Naive thymus-derived CD8-positive, alpha-beta T cell (primary cell): ENCODE measurements at regions of chr17 and their contacts with region 1.

Region 1: GRCh38 chr17:45034599-45034998 is 16.8 kb downstream of the DCAKD start:
- DNase-seq: no peak
- ATAC-seq: no peak
- H3K4me3 Mint-ChIP-seq: no peak overlapping the region
- H3K27ac Mint-ChIP-seq: peak overlapping the region in 2 of 10 donors; percentile 63 to 79
- H3K4me1 Mint-ChIP-seq: peaks cover 5 to 23% (median 9%) of the 10 kb centered on the region in 4 donors
- H3K27me3 Mint-ChIP-seq: no peaks in the 10 kb centered on the region

Region 2: GRCh38 chr17:44959821-44960531 is 74.6 kb before region 1 on chr17:
- POLR2A ChIA-PET with region 1: interaction called, 15 read pairs
- DNase-seq: no peak
- ATAC-seq: peak; percentile 33 to 71
- H3K4me3 Mint-ChIP-seq: peak overlapping the region in 7 of 10 donors; percentile 22 to 72 (median 55)
- H3K27ac Mint-ChIP-seq: no peak overlapping the region
- H3K4me1 Mint-ChIP-seq: peaks cover 0 to 6% (median 4%) of the 10 kb centered on the region in 4 donors
- H3K27me3 Mint-ChIP-seq: peaks cover 14 to 68% (median 47%) of the 10 kb centered on the region in 5 donors